Naive thymus-derived CD4-positive, alpha-beta T cell (primary cell): ENCODE measurements at regions of chr12 and their contacts with region 1.

Region 1: GRCh38 chr12:96194971-96195844 is 1.0 kb downstream of the ELK3 start:
- DNase-seq: peak in 8 of 9 donors; percentile 34 to 91 (median 71)
- ATAC-seq: peak; percentile 80
- H3K4me3 ChIP-seq: peak overlapping the region; percentile 84
- H3K4me3 Mint-ChIP-seq: peak overlapping the region; percentile 92 to 100 (median 98)
- H3K27ac ChIP-seq: peak overlapping the region; percentile 86
- H3K27ac Mint-ChIP-seq: peak overlapping the region; percentile 95 to 99 (median 99)
- H3K4me1 ChIP-seq: peaks cover 29 to 33% of the 10 kb centered on the region in 2 donors
- H3K4me1 Mint-ChIP-seq: peaks cover 30 to 54% (median 46%) of the 10 kb centered on the region in 7 donors
- H3K27me3 ChIP-seq: no peaks in the 10 kb centered on the region
- H3K27me3 Mint-ChIP-seq: peaks cover 0 to 3% (median 0%) of the 10 kb centered on the region in 5 donors

Region 2: DNA sequence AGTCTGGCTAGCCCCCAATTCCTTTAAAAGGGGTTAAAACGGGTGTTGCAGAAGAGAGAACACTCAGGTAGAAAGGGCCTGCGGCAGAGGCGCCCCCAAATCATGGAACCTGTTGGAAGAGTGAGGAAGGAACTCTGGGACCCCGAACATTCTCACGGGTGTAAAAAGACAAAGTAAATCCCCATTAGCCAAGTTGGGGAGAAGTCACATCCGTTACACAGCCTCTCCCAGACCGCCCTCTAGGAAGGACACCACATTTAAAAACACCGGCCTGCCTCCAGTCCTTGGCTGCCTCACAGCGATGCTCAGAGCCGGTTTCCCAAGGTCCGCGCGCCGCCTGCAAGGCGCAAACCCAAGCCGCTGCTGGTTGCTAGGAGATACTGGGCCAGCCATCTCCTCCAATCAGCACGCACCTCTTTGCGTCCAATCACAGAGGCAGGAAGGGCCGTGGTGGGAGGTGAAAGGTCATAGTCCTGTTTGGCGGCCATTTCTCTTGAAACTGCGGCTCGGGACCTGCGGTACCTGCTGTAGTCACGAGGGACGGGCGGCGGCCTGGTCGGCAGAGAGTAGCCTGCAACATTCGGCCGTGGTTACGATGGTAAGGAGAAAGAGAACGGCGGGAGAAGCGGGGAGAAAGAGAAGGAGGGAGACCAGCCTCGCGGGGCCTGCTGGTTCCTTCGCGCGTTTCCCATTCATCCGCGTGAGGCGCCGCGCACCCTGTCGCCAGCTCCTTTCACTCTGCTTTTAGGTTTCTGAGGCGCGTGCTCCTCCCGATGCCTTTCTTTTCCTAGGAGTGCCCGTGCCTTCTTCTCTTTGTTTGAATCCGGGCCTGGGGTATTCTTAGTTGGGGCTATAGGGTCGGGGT is 336.5 kb before region 1 on chr12 and contains the start of gene SNRPF:
- CTCF ChIA-PET with region 1: no interaction called
- POLR2A ChIA-PET with region 1: no interaction called
- intact Hi-C with region 1: loop called (anchors 1 to 10 kb)
- DNase-seq: peak; percentile 88 to 96 (median 92)
- ATAC-seq: peak; percentile 98
- H3K4me3 ChIP-seq: peak within 1 kb of the TSS; percentile 82
- H3K4me3 Mint-ChIP-seq: no peak within 1 kb of the TSS
- H3K27ac ChIP-seq: peak within 1 kb of the TSS; percentile 86
- H3K27ac Mint-ChIP-seq: no peak within 1 kb of the TSS
- H3K4me1 ChIP-seq: peaks cover 11 to 12% of the 10 kb centered on the region in 2 donors
- H3K4me1 Mint-ChIP-seq: peaks cover 13 to 27% (median 16%) of the 10 kb centered on the region in 7 donors
- H3K27me3 ChIP-seq: no peaks in the 10 kb centered on the region
- H3K27me3 Mint-ChIP-seq: peaks cover 3 to 11% (median 7%) of the 10 kb centered on the region in 5 donors
- total RNA-seq, gene SNRPF: 19.0 to 40.4 (median 21.7) TPM

Region 3: DNA sequence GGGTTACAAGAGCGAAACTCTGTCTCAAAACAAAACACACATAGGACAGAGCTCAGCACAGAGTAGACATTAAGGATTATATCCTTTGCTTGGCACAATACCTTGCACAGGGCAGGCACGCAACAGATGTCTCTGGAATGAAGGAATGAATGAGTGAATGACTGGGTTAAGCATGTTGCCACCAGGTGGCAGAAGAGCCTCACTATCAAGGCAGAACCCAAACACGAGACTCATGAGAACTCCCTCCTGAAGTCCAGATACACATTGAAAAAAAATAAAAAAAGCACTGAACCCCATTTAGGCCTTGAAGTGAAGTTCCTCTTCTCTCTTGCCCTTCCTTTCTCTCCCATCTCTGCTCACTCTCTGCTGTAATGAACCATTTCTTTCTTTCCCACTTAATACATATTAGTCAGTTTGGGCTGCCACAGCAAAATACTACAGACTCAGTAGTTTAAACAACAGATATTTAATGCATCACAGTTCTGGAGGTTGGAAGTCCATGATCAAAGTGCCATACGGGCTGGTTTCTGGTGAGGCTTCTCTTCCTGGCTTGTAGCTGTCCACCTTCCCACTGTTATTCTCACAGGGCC is 133.2 kb before region 1 on chr12:
- CTCF ChIA-PET with region 1: interaction called, 5 read pairs
- POLR2A ChIA-PET with region 1: no interaction called
- intact Hi-C with region 1: loop called in 1 of 2 experiments (anchors 1 kb)
- DNase-seq: peak; percentile 39 to 79 (median 70)
- ATAC-seq: peak; percentile 94
- H3K4me3 ChIP-seq: no peak overlapping the region
- H3K4me3 Mint-ChIP-seq: no peak overlapping the region
- H3K27ac ChIP-seq: no peak overlapping the region
- H3K27ac Mint-ChIP-seq: peak overlapping the region in 2 of 9 donors; percentile 1 to 28
- H3K4me1 ChIP-seq: peaks cover 0 to 12% of the 10 kb centered on the region in 2 donors
- H3K4me1 Mint-ChIP-seq: peaks cover 8 to 31% (median 30%) of the 10 kb centered on the region in 7 donors
- H3K27me3 ChIP-seq: no peaks in the 10 kb centered on the region
- H3K27me3 Mint-ChIP-seq: no peaks in the 10 kb centered on the region

Region 4: DNA sequence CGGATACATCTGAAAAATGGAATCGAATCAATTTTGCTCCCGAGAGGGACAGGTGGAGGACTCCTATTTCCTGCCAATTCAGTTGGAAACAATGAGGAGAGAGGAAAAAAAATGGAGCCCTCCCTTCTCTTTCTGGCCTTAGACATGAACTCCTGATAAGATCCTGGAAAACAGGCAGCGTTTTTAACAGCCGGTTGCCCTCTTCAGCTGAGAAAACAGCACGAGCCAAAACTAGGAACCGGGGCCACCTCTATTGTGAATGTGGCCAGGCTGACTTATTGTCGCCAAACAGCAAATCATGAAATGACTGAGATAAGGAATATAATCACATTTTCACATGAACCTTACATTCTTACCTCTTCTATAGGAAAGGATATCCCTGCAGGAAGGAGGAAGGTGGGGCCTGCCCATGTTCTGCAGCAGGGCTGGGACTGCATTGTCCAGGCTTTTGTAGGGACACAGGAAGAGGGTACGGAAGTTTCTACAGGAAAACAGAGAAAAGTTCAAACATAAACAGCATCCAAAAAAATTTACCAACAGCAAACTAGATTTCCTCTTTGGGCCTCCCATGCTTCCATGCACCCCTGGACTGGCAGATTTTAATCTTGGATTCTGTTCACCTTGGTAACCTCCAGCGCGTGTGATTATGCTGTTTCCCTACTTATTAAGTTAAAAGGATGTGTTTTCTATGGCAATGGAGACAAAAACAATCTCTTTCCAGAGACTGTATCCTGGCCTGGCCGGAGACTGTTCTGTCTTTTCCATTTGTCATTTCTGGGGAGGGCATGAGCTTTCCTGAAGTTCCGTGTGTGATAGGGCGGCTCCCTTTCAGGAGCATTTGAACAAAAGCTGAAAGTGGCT is 30.0 kb before region 1 on chr12:
- CTCF ChIA-PET with region 1: no interaction called
- POLR2A ChIA-PET with region 1: no interaction called
- intact Hi-C with region 1: no loop called
- DNase-seq: no peak
- ATAC-seq: no peak
- H3K4me3 ChIP-seq: no peak overlapping the region
- H3K4me3 Mint-ChIP-seq: no peak overlapping the region
- H3K27ac ChIP-seq: no peak overlapping the region
- H3K27ac Mint-ChIP-seq: no peak overlapping the region
- H3K4me1 ChIP-seq: no peaks in the 10 kb centered on the region
- H3K4me1 Mint-ChIP-seq: peaks cover 0 to 3% (median 0%) of the 10 kb centered on the region in 7 donors
- H3K27me3 ChIP-seq: no peaks in the 10 kb centered on the region
- H3K27me3 Mint-ChIP-seq: no peaks in the 10 kb centered on the region

Region 5: DNA sequence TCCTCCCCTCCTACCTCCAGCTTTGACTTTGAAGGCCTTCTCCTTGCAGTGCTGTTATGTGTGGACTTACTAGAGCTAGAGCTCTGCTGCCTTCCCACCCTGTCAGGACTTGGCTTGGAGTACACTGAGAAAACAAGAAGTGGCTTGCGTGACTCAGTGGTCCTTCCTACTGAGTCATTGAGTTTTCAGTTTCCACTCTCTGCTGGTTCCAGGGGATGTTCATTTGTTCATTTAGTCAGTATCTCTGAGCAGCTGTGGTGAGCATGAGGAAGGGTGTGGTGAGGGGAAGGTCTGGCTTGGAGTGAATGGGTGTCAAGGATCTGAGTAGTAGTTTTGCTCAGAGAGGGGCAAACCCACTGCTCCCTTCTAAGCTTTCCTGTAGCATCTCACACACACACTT is 18.2 kb before region 1 on chr12:
- CTCF ChIA-PET with region 1: no interaction called
- POLR2A ChIA-PET with region 1: interaction called, 3 read pairs
- intact Hi-C with region 1: loop called in 1 of 2 experiments (anchors 1 kb)
- DNase-seq: peak in 1 of 9 donors; percentile 69
- ATAC-seq: peak; percentile 93
- H3K4me3 ChIP-seq: no peak overlapping the region
- H3K4me3 Mint-ChIP-seq: peak overlapping the region in 5 of 10 donors; percentile 1 to 64 (median 16)
- H3K27ac ChIP-seq: no peak overlapping the region
- H3K27ac Mint-ChIP-seq: peak overlapping the region in 7 of 9 donors; percentile 3 to 85 (median 80)
- H3K4me1 ChIP-seq: peaks cover 0 to 6% of the 10 kb centered on the region in 2 donors
- H3K4me1 Mint-ChIP-seq: peaks cover 4 to 17% (median 7%) of the 10 kb centered on the region in 7 donors
- H3K27me3 ChIP-seq: no peaks in the 10 kb centered on the region
- H3K27me3 Mint-ChIP-seq: peaks cover 0 to 9% (median 0%) of the 10 kb centered on the region in 5 donors

Region 6: GRCh38 chr12:96375841-96376604 is 180.8 kb after region 1 on chr12:
- CTCF ChIA-PET with region 1: no interaction called
- POLR2A ChIA-PET with region 1: interaction called, 3 read pairs
- intact Hi-C with region 1: loop called in 1 of 2 experiments (anchors 2 kb)
- DNase-seq: no peak
- ATAC-seq: no peak
- H3K4me3 ChIP-seq: no peak overlapping the region
- H3K4me3 Mint-ChIP-seq: peak overlapping the region; percentile 53 to 91 (median 64)
- H3K27ac ChIP-seq: peak overlapping the region; percentile 72
- H3K27ac Mint-ChIP-seq: peak overlapping the region in 8 of 9 donors; percentile 74 to 98 (median 96)
- H3K4me1 ChIP-seq: peaks cover 46 to 70% of the 10 kb centered on the region in 2 donors
- H3K4me1 Mint-ChIP-seq: peaks cover 59 to 94% (median 74%) of the 10 kb centered on the region in 7 donors
- H3K27me3 ChIP-seq: no peaks in the 10 kb centered on the region
- H3K27me3 Mint-ChIP-seq: no peaks in the 10 kb centered on the region

Region 7: DNA sequence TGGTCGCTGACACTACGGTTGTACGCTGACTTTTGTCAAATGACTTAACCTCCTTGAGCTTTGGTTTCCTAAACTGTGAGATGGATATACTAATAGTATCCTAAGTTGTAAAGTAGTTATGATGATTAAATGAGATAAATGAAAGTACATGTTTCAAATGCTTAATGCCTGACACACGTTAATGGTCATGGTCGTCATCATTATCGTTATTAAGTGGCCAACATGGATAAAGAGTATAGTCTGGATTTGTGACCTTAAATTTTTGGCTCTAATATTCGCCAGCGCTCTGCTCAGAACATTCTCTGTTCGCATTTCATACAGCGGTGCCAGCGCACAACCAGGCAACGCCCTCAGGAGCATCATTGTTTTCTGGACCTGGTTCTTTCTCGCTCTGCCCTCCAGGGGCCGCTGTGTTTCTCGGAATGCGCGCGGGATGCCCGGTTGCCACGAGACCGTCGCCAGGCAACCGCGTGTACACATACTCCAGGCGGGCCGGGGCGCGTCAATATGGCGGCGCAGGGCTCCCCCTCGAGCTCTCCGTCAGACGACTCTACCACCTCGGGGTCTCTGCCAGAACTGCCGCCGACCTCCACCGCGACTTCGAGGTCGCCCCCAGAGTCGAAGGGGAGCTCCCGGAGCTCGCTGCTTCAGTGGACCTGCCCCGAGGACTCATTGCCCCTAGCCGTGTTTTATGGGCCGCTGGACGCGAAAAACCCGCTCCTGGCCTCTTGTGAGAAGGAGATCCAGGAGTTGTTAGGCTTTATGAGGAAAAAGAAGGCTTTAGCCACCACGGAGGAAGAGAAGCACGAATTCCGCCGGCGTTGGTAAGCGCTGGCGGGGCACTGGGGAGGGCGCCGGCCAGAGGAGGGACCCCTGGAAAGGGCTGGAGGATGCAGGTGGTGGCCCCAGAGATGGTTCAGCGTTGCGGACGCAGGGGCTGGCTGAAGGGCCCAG is 294.2 kb after region 1 on chr12 and contains the start of gene CFAP54:
- CTCF ChIA-PET with region 1: no interaction called
- POLR2A ChIA-PET with region 1: no interaction called
- intact Hi-C with region 1: loop called in 1 of 2 experiments (anchors 2 kb)
- DNase-seq: peak; percentile 91 to 97 (median 94)
- ATAC-seq: peak; percentile 96
- H3K4me3 ChIP-seq: peak within 1 kb of the TSS; percentile 71
- H3K4me3 Mint-ChIP-seq: peak within 1 kb of the TSS; percentile 77 to 93 (median 88)
- H3K27ac ChIP-seq: peak within 1 kb of the TSS; percentile 66
- H3K27ac Mint-ChIP-seq: peak within 1 kb of the TSS; percentile 68 to 96 (median 89)
- H3K4me1 ChIP-seq: peaks cover 7 to 12% of the 10 kb centered on the region in 2 donors
- H3K4me1 Mint-ChIP-seq: peaks cover 14 to 37% (median 22%) of the 10 kb centered on the region in 7 donors
- H3K27me3 ChIP-seq: no peaks in the 10 kb centered on the region
- H3K27me3 Mint-ChIP-seq: peaks cover 0 to 33% (median 0%) of the 10 kb centered on the region in 5 donors
- total RNA-seq, gene CFAP54: 0.22 to 0.93 (median 0.30) TPM